MCF 10A (cell line): ENCODE measurements at regions of chr6 and their contacts with region 1.

Region 1: DNA sequence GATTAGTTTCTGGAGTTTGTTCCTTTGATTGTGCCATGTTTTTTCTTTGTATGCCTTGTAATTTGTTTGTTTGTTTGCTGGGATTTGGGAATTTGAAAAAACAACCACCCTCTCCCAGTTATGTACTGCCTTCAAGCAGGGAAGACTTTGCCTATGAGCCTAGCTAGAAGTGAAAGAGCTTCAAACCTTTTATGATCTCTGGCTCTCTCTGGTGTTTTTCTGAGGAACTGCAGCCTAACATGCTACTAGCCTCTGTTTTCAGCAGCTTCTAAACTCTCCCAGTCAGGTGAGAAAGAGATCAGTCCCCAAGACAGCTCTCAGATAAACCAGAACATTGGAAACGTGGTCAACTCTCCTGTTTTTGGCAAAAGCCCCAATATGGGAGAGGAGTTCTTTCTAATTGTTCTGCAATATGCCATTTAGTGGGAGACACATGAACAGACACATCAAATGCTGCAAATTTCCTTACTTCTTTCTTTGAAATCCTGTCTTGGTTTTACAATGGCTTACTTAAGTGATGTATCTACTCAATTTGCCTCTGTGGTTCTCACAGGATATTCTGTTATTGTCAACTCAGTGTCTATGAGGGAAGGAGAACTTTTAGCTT is 58.9 kb upstream of the SERINC1 start:
- DNase-seq: peak; percentile 73
- H3K4me3 Mint-ChIP-seq: no peak overlapping the region
- H3K27ac Mint-ChIP-seq: no peak overlapping the region
- H3K4me1 Mint-ChIP-seq: no peaks in the 10 kb centered on the region
- H3K27me3 Mint-ChIP-seq: peaks cover 31% of the 10 kb centered on the region
- CTCF ChIP-seq: peak; percentile 86

Region 2: GRCh38 chr6:122381497-122382265 is 148.9 kb before region 1 on chr6:
- CTCF ChIA-PET with region 1: interaction called, 98 read pairs
- POLR2A ChIA-PET with region 1: no interaction called
- intact Hi-C with region 1: loop called (anchors 1 kb)
- DNase-seq: peak; percentile 61
- H3K4me3 Mint-ChIP-seq: no peak overlapping the region
- H3K27ac Mint-ChIP-seq: no peak overlapping the region
- H3K4me1 Mint-ChIP-seq: no peaks in the 10 kb centered on the region
- H3K27me3 Mint-ChIP-seq: peaks cover 37% of the 10 kb centered on the region
- CTCF ChIP-seq: peak; percentile 67

Region 3: DNA sequence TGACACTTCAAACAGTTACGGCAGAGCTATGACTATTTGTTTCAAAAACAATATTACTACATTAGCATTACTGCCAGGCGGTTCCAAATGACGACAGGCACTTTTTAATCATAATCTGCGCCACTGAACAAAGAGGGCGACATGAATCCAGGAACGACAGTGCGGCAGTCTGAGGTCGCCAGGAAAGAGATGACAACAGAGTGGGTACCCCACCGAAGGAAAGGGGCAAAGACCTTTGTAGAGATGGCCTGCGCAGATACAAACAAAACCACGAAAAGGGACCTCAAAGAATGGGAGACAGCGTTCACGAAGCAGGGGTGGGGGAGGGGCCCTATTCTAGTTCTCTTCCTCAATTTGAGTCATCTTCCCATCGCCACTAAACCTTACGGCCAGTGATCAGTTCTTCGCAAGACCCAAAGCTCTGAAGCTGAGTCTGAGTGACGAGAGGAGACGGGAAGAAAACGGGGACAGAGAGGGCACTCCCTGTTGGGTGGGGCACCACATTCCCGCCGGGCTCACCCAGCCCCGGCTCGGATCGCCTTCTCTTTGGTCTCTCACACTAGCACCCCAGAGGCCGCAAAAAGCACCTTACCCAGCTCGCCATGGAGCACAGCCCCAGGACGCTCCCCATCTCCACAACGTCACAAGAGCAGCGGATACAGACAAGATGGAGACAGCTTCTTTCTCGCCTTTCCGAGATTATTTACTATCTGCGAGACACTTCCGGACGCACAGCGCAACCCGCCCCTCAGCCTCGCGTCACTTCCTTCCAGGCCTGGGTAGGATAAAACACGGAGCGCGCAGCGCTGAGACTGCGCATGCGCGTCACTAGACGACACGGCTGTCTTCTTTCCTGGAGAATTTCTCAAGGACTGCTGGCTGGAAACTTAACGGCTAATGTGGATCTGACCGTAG is 59.2 kb before region 1 on chr6 and contains the start of gene SERINC1:
- CTCF ChIA-PET with region 1: interaction called, 6 read pairs
- POLR2A ChIA-PET with region 1: interaction called, 5 read pairs
- intact Hi-C with region 1: loop called (anchors 1 kb)
- DNase-seq: peak; percentile 94
- H3K4me3 Mint-ChIP-seq: peak within 1 kb of the TSS; percentile 98
- H3K27ac Mint-ChIP-seq: peak within 1 kb of the TSS; percentile 100
- H3K4me1 Mint-ChIP-seq: peaks cover 26% of the 10 kb centered on the region
- H3K27me3 Mint-ChIP-seq: no peaks in the 10 kb centered on the region
- CTCF ChIP-seq: no peak
- total RNA-seq, gene SERINC1: 106 and 128 TPM in 2 replicates

Region 4: GRCh38 chr6:122491919-122492555 is 38.5 kb before region 1 on chr6:
- CTCF ChIA-PET with region 1: interaction called, 202 read pairs
- POLR2A ChIA-PET with region 1: interaction called, 7 read pairs
- intact Hi-C with region 1: loop called (anchors 1 kb)
- DNase-seq: peak; percentile 80
- H3K4me3 Mint-ChIP-seq: no peak overlapping the region
- H3K27ac Mint-ChIP-seq: peak overlapping the region; percentile 2
- H3K4me1 Mint-ChIP-seq: peaks cover 6% of the 10 kb centered on the region
- H3K27me3 Mint-ChIP-seq: no peaks in the 10 kb centered on the region
- CTCF ChIP-seq: peak; percentile 77

Region 5: DNA sequence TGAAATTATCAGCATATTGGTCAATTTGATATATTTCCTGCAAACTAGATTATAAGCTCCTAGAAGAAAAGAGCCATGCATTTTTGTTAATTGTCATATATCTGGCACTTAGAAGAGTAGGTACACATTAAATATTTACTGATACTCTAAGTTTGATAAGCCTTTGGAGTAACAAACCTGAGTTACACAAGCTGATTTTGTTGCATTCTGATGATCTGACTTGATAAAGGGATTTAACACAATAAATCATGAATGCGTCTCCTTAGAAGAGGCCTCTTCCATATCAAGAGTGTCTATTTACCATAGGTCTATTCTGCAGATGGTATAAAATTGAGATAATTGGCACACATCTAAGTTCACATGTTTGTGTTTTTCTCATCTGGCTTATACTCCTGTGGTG is 10.4 kb before region 1 on chr6:
- CTCF ChIA-PET with region 1: interaction called, 26 read pairs
- POLR2A ChIA-PET with region 1: no interaction called
- intact Hi-C with region 1: no loop called
- DNase-seq: no peak
- H3K4me3 Mint-ChIP-seq: no peak overlapping the region
- H3K27ac Mint-ChIP-seq: no peak overlapping the region
- H3K4me1 Mint-ChIP-seq: no peaks in the 10 kb centered on the region
- H3K27me3 Mint-ChIP-seq: no peaks in the 10 kb centered on the region
- CTCF ChIP-seq: no peak

Region 6: GRCh38 chr6:122558080-122558479 is 27.5 kb after region 1 on chr6:
- CTCF ChIA-PET with region 1: interaction called, 19 read pairs
- POLR2A ChIA-PET with region 1: interaction called, 3 read pairs
- intact Hi-C with region 1: no loop called
- DNase-seq: no peak
- H3K4me3 Mint-ChIP-seq: no peak overlapping the region
- H3K27ac Mint-ChIP-seq: no peak overlapping the region
- H3K4me1 Mint-ChIP-seq: no peaks in the 10 kb centered on the region
- H3K27me3 Mint-ChIP-seq: no peaks in the 10 kb centered on the region
- CTCF ChIP-seq: no peak

Region 7: DNA sequence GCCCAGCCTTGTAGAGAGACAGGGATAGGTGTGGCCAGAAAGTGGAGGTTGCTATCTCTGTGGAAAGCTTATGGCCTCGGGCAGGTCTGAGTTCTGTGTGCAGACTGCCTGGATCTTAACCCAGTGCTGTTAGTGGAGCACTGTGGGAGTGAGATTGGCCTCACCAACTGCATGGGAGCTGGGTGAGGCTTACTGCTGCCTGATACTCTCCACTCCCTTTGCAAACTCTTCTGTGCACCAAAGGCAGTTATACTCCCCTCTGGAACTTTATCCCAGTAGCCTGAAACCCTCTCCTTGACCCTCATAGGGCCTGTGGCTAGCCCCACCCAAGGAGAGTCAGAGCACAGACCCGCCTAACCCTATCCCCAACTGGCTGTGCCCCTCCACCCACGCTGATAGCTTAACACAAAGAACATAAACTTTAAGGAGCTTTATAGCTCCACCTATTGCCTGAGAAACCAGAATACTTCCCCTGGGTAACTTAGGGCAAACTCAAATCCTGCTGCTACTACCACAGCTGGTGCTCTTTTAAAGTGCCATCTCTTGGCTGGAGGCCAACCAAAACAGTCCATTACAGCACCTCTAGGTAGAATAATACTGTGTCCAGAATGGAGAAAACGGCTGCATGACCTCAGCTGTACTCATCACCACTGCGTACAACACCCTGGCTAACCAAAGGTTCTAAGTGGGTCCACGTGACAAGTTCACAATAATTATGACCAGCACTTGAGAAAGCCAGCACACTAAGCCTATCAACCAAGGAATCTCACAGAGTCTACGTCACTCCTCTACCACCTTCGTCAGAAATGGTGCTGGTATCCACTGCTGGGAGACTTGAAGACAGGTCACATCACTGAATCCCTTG is 38.5 kb after region 1 on chr6:
- CTCF ChIA-PET with region 1: interaction called, 19 read pairs
- POLR2A ChIA-PET with region 1: no interaction called
- intact Hi-C with region 1: no loop called
- DNase-seq: peak; percentile 30
- H3K4me3 Mint-ChIP-seq: no peak overlapping the region
- H3K27ac Mint-ChIP-seq: no peak overlapping the region
- H3K4me1 Mint-ChIP-seq: peaks cover 14% of the 10 kb centered on the region
- H3K27me3 Mint-ChIP-seq: no peaks in the 10 kb centered on the region
- CTCF ChIP-seq: no peak

Region 8: DNA sequence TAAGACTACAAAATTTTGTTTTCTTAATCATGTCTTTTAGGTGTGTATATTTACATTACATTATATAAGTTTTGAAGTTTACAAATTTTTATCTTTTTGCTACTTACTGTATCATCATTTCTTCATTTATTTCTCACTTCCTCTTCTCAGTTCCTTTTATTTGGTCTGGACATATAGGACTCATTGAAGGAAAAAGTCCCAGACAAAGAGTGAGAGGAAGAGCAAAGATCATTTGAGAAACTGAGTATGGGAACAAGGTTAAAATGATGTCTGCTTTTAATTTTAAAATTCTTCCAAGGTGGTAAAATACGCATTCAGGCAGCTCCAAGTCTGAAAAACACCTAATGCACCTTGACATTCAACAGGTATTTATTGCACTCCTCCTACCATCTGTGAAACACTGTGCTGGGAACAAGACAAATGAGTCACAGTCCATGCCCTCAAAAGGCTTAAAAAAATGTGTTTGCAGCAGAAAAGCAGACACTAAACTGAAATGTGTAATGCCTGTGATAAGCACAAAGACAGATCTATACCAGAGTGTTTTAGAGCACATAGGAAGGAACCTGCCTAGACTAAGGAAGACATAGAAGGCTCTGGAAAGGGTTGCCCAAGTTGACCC is 142.9 kb after region 1 on chr6:
- CTCF ChIA-PET with region 1: no interaction called
- POLR2A ChIA-PET with region 1: no interaction called
- intact Hi-C with region 1: no loop called
- DNase-seq: peak; percentile 24
- H3K4me3 Mint-ChIP-seq: no peak overlapping the region
- H3K27ac Mint-ChIP-seq: no peak overlapping the region
- H3K4me1 Mint-ChIP-seq: peaks cover 8% of the 10 kb centered on the region
- H3K27me3 Mint-ChIP-seq: no peaks in the 10 kb centered on the region
- CTCF ChIP-seq: no peak

Region 9: DNA sequence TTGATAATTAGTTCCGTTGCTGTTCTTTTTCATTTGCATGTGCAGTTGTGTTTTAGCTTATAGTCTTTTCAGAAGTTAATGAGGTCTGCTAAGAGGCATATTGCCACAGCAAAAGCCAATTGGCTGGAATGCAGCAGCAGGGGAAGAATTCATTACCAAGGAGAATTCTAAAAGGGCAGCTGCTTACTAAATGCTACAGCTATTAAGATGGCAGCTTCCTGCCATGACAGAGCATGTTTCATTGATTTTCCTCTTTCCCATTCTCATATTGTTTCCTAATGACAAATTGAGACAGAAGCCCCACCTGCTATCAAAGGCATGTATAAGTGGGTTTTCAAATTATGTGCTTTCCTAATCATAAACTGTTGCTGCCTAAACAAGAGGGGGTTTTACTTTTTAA is 532.1 kb after region 1 on chr6:
- CTCF ChIA-PET with region 1: no interaction called
- POLR2A ChIA-PET with region 1: no interaction called
- intact Hi-C with region 1: no loop called
- DNase-seq: no peak
- H3K4me3 Mint-ChIP-seq: no peak overlapping the region
- H3K27ac Mint-ChIP-seq: no peak overlapping the region
- H3K4me1 Mint-ChIP-seq: peaks cover 7% of the 10 kb centered on the region
- H3K27me3 Mint-ChIP-seq: no peaks in the 10 kb centered on the region
- CTCF ChIP-seq: no peak